MCF 10A (cell line): ENCODE measurements at regions of chr5 and their contacts with region 1.

Region 1: GRCh38 chr5:119022017-119022745 is 33.8 kb upstream of the DTWD2 start:
- DNase-seq: peak; percentile 57
- H3K4me3 Mint-ChIP-seq: no peak overlapping the region
- H3K27ac Mint-ChIP-seq: no peak overlapping the region
- H3K4me1 Mint-ChIP-seq: peaks cover 6% of the 10 kb centered on the region
- H3K27me3 Mint-ChIP-seq: no peaks in the 10 kb centered on the region
- CTCF ChIP-seq: peak; percentile 61

Region 2: GRCh38 chr5:119131530-119132313 is 109.5 kb after region 1 on chr5:
- CTCF ChIA-PET with region 1: no interaction called
- POLR2A ChIA-PET with region 1: no interaction called
- intact Hi-C with region 1: no loop called
- DNase-seq: no peak
- H3K4me3 Mint-ChIP-seq: no peak overlapping the region
- H3K27ac Mint-ChIP-seq: no peak overlapping the region
- H3K4me1 Mint-ChIP-seq: no peaks in the 10 kb centered on the region
- H3K27me3 Mint-ChIP-seq: no peaks in the 10 kb centered on the region
- CTCF ChIP-seq: no peak

Region 3: DNA sequence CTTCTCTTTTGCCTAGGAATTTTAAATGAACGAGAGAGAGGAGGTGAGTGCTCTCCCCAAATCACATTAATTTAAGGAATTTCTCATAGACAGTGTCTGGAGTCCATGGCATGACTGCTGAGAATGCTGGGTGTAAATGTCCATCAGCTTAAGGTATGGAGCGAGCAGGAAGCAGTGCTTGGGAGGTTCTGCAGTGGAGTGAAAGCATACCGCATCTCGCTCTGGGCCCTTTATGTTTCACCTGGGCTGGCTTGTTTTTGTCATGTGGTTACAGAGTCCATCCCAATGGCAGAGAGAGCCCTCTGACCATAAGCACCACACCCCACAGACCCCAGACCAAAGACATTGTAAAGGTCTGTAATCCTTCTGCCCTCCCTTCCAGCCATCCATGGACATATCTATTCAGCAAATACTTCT is 313.1 kb after region 1 on chr5:
- CTCF ChIA-PET with region 1: interaction called, 15 read pairs
- POLR2A ChIA-PET with region 1: interaction called, 4 read pairs
- intact Hi-C with region 1: loop called (anchors 1 kb)
- DNase-seq: no peak
- H3K4me3 Mint-ChIP-seq: peak overlapping the region; percentile 72
- H3K27ac Mint-ChIP-seq: peak overlapping the region; percentile 76
- H3K4me1 Mint-ChIP-seq: peaks cover 45% of the 10 kb centered on the region
- H3K27me3 Mint-ChIP-seq: no peaks in the 10 kb centered on the region
- CTCF ChIP-seq: no peak

Region 4: GRCh38 chr5:119743927-119744326 is 721.7 kb after region 1 on chr5:
- CTCF ChIA-PET with region 1: interaction called, 3 read pairs
- POLR2A ChIA-PET with region 1: no interaction called
- intact Hi-C with region 1: loop called (anchors 1 kb)
- DNase-seq: peak; percentile 89
- H3K4me3 Mint-ChIP-seq: no peak overlapping the region
- H3K27ac Mint-ChIP-seq: no peak overlapping the region
- H3K4me1 Mint-ChIP-seq: no peaks in the 10 kb centered on the region
- H3K27me3 Mint-ChIP-seq: no peaks in the 10 kb centered on the region
- CTCF ChIP-seq: peak; percentile 58